K562 (cell line): ENCODE measurements at regions of chr13 and their contacts with region 1.

Region 1: GRCh38 chr13:52599848-52600603 is 42.2 kb upstream of the HNRNPA1L2 start:
- DNase-seq: no peak
- ATAC-seq: no peak
- H3K4me3 ChIP-seq: no peak overlapping the region
- H3K27ac ChIP-seq: no peak overlapping the region
- H3K4me1 ChIP-seq: peaks cover 0 to 4% of the 10 kb centered on the region in 2 experiments; a peak in 1 of 5 replicates
- H3K27me3 ChIP-seq: peaks cover 0 to 5% of the 10 kb centered on the region in 2 experiments; a peak in 1 of 5 replicates
- CTCF ChIP-seq: no peak
- EP300 ChIP-seq: no peak
- POLR2A ChIP-seq: no peak
- RAD21 ChIP-seq: no peak

Region 2: GRCh38 chr13:52809310-52809769 is 209.3 kb after region 1 on chr13:
- CTCF ChIA-PET with region 1: no interaction called
- POLR2A ChIA-PET with region 1: no interaction called
- in situ Hi-C with region 1: no loop called
- intact Hi-C with region 1: no loop called
- DNase-seq: peak; percentile 82 to 87 (median 84)
- ATAC-seq: peak; percentile 94
- H3K4me3 ChIP-seq: no peak overlapping the region
- H3K27ac ChIP-seq: no peak overlapping the region
- H3K4me1 ChIP-seq: no peaks in the 10 kb centered on the region
- H3K27me3 ChIP-seq: no peaks in the 10 kb centered on the region; a peak in 1 of 5 replicates
- CTCF ChIP-seq: peak; percentile 68 to 75 (median 74)
- EP300 ChIP-seq: no peak
- POLR2A ChIP-seq: no peak
- RAD21 ChIP-seq: peak; percentile 62 to 73

Region 3: DNA sequence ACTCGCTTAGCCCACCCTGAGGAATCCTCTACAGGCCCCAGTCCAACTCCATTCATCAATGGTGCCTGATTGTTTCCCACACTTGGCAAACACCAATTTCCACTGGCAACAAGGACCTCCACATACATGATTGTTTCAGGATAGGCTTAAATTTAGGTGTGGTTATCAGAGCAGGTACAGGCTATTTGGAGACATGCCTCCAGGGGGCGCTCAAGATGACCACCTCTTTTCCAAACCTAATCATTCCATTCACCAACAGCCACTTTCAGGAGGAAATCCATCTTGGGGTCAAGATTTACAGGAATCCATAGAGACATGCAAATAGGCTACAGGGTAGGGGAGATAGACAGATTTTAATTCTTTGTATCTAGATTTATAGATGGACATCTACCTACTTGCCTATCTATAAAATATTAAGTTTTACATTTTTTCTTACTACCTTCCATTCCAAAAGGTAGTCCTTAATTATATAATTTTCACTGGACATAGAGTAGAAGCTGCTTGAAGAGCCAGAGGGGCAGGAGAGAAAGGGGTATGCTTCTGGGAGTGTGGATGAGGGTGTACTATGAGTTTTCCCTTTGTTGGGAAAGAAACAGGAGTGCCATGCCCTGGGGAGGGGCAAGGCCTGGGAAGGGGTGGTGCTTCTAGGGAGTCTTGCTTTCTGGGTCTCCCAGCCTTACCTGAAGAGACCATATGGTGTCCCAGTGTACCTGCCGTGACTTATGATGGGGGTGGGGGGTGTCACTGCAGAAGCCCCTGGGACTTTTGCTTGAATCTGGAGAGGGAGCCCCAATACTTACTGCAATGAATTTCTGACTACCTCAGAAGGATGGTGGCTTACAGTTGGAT is 262.6 kb after region 1 on chr13:
- CTCF ChIA-PET with region 1: no interaction called
- POLR2A ChIA-PET with region 1: no interaction called
- in situ Hi-C with region 1: no loop called
- intact Hi-C with region 1: no loop called
- DNase-seq: peak; percentile 36 to 59 (median 52)
- ATAC-seq: peak; percentile 67; the same call in 2 of the 3 replicates
- H3K4me3 ChIP-seq: no peak overlapping the region
- H3K27ac ChIP-seq: no peak overlapping the region
- H3K4me1 ChIP-seq: no peaks in the 10 kb centered on the region
- H3K27me3 ChIP-seq: no peaks in the 10 kb centered on the region
- CTCF ChIP-seq: peak; percentile 44 to 69 (median 62)
- EP300 ChIP-seq: no peak
- POLR2A ChIP-seq: no peak
- RAD21 ChIP-seq: no peak

Region 4: GRCh38 chr13:53151336-53152056 is 551.5 kb after region 1 on chr13:
- CTCF ChIA-PET with region 1: no interaction called
- POLR2A ChIA-PET with region 1: no interaction called
- in situ Hi-C with region 1: loop called (anchors 25 kb)
- intact Hi-C with region 1: loop called (anchors 5 kb)
- DNase-seq: peak; percentile 38 to 54 (median 47)
- ATAC-seq: peak; percentile 82
- H3K4me3 ChIP-seq: no peak overlapping the region
- H3K27ac ChIP-seq: no peak overlapping the region
- H3K4me1 ChIP-seq: no peaks in the 10 kb centered on the region
- H3K27me3 ChIP-seq: no peaks in the 10 kb centered on the region
- CTCF ChIP-seq: peak; percentile 65 to 74 (median 66)
- EP300 ChIP-seq: no peak
- POLR2A ChIP-seq: no peak
- RAD21 ChIP-seq: peak; percentile 35 to 59; a peak in 3 of 4 replicates